ENCODE measurements at regions of chr12 and their contacts with region 1.

Region 1: DNA sequence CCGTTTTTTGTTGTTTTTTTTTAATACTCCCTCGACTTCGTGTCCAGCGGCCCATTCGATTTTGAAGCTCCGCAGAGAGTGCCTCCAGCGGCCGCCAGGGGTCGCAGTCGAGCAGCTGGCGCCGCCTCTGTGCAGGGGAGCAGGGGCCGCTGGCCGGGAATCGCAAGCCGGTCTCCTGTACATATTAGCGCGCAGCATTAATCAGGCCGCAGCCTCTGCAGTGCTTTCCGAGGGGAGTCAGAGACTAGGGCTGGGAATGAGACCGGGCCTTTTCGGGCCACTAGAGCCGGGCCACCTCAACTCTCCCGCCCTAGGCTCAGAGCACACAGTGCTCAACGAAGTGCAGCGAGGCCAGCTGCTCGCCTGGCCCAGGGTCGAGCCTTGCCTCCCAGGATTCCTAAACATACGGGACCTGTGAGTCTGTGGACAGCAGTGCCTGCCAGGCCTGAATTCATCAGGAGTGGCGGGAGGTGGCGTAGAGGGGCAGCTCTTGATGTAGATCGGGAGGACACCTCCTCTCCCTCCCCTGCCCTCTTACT is 81.8 kb downstream of the EMP1 start:
- DNase-seq: peak; percentile 82
- ATAC-seq: peak; percentile 97
- H3K4me3 Mint-ChIP-seq: no peak overlapping the region
- H3K27ac Mint-ChIP-seq: no peak overlapping the region
- H3K4me1 Mint-ChIP-seq: peaks cover 3% of the 10 kb centered on the region
- H3K27me3 Mint-ChIP-seq: peaks cover 32% of the 10 kb centered on the region

Region 2: DNA sequence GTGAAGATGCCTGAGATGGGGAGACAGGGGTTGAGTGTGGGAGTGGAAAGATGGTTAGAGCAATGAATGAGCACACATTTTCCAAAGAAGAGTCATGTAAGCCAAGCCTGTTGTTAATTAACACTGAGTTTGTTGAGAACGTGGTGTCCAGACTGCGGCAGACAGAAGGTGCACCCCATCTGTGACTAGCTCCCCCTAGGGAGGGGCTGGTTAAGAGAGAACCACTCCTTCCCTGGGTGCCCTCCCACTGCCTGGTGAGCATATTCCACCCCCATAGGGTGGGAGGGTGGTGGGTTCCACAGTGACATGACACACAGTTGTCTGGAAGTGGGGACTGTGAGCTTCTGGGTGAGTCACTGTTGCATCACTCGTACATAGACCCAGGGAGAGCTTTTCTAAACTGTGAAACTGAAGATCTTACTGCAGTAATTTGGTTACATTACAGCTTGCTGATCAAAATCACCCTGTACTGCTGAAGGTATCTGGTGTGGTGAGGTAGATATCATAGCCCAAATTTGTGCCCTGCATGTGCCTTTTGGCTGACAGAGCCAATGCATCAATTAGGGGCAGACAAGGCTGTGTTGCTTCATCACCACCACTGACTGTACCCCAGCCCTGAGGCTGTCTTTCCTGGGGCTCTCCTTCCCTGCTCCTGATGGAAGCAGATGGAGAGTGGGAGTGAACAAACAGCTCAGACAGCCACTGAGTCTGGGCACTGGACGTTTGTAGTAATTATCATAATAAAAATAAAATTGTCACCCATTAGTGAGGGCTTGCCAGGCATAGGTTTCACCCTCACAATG is 69.1 kb after region 1 on chr12:
- CTCF ChIA-PET with region 1: interaction called, 5 read pairs
- POLR2A ChIA-PET with region 1: no interaction called
- intact Hi-C with region 1: loop called in 1 of 2 experiments (anchors 5 kb)
- DNase-seq: peak; percentile 82
- ATAC-seq: peak; percentile 92
- H3K4me3 Mint-ChIP-seq: no peak overlapping the region
- H3K27ac Mint-ChIP-seq: peak overlapping the region; percentile 21
- H3K4me1 Mint-ChIP-seq: peaks cover 23% of the 10 kb centered on the region
- H3K27me3 Mint-ChIP-seq: peaks cover 45% of the 10 kb centered on the region

Region 3: GRCh38 chr12:13534645-13535398 is 256.5 kb after region 1 on chr12:
- CTCF ChIA-PET with region 1: interaction called, 9 read pairs
- POLR2A ChIA-PET with region 1: no interaction called
- intact Hi-C with region 1: loop called (anchors 1 to 10 kb)
- DNase-seq: peak; percentile 78
- ATAC-seq: no peak
- H3K4me3 Mint-ChIP-seq: no peak overlapping the region
- H3K27ac Mint-ChIP-seq: no peak overlapping the region
- H3K4me1 Mint-ChIP-seq: peaks cover 6% of the 10 kb centered on the region
- H3K27me3 Mint-ChIP-seq: peaks cover 17% of the 10 kb centered on the region

Region 4: DNA sequence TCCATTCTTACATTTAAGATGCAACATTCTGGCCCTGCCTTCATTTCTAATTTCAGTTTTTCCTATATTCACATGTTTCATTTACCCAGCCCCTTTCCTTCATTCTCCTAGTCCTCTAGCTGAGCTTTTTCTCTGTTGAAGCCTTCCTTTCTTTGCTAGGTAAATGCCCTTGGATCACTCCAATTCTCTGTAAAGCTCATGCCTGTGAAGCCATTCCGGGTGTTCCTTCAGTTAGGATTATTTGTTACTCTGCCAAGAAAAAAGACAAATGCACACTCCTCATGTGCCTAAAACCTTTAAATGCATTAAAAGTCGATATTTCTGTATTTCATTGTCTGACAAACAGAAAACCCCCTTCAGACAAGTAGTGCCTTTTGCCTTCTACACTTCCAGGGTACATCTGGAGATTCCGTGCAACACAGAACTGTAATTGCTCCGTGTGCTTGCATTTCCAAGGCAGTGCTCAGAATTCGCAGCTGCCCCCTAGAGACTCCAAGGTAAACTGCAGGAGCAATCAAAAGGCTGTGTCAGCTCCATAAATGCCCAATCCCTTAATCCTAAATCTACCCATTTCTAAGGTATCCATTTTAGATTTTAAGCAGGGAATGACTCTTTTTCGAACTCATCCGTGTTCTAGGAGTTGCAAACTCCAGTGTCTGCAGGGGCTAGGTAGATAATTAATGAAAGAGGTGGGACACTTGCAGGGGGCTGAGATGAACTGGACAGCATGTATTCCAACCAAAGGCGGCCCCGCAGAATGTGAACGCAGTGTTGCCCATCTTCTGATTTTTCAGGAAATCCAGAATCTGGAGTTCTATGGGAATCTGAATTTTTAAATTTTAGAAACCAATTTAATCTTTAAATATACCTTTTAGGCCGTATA is 382.9 kb after region 1 on chr12:
- CTCF ChIA-PET with region 1: interaction called, 4 read pairs
- POLR2A ChIA-PET with region 1: no interaction called
- intact Hi-C with region 1: loop called (anchors 1 to 2 kb)
- DNase-seq: peak; percentile 46
- ATAC-seq: peak; percentile 68
- H3K4me3 Mint-ChIP-seq: no peak overlapping the region
- H3K27ac Mint-ChIP-seq: no peak overlapping the region
- H3K4me1 Mint-ChIP-seq: peaks cover 3% of the 10 kb centered on the region
- H3K27me3 Mint-ChIP-seq: peaks cover 11% of the 10 kb centered on the region

Region 5: GRCh38 chr12:13941258-13942249 is 663.2 kb after region 1 on chr12:
- CTCF ChIA-PET with region 1: no interaction called
- POLR2A ChIA-PET with region 1: no interaction called
- intact Hi-C with region 1: loop called in 1 of 2 experiments (anchors 5 kb)
- DNase-seq: peak; percentile 46
- ATAC-seq: peak; percentile 55
- H3K4me3 Mint-ChIP-seq: no peak overlapping the region
- H3K27ac Mint-ChIP-seq: no peak overlapping the region
- H3K4me1 Mint-ChIP-seq: no peaks in the 10 kb centered on the region
- H3K27me3 Mint-ChIP-seq: peaks cover 23% of the 10 kb centered on the region

Region 6: GRCh38 chr12:14167005-14167628 is 888.8 kb after region 1 on chr12:
- CTCF ChIA-PET with region 1: interaction called, 5 read pairs
- POLR2A ChIA-PET with region 1: no interaction called
- intact Hi-C with region 1: loop called (anchors 1 to 5 kb)
- DNase-seq: peak; percentile 50
- ATAC-seq: no peak
- H3K4me3 Mint-ChIP-seq: no peak overlapping the region
- H3K27ac Mint-ChIP-seq: no peak overlapping the region
- H3K4me1 Mint-ChIP-seq: no peaks in the 10 kb centered on the region
- H3K27me3 Mint-ChIP-seq: peaks cover 10% of the 10 kb centered on the region

Measured in activated CD4-positive, alpha-beta T cell treated with anti-CD3 and anti-CD28 coated beads for 36 hours (primary cell).